Activated CD4-positive, alpha-beta T cell treated with anti-CD3 and anti-CD28 coated beads, Interleukin-2, amount 10 ng/mL, durations not matched to agents 24 days and 14 days (primary cell): ENCODE measurements at regions of chr9 and their contacts with region 1.

Region 1: GRCh38 chr9:88303721-88304451 is 84.4 kb upstream of the SPIN1 start:
- DNase-seq: peak; percentile 89
- H3K4me3 Mint-ChIP-seq: peak overlapping the region; percentile 62
- H3K27ac Mint-ChIP-seq: peak overlapping the region; percentile 92
- H3K4me1 Mint-ChIP-seq: peaks cover 53% of the 10 kb centered on the region
- H3K27me3 Mint-ChIP-seq: no peaks in the 10 kb centered on the region

Region 2: DNA sequence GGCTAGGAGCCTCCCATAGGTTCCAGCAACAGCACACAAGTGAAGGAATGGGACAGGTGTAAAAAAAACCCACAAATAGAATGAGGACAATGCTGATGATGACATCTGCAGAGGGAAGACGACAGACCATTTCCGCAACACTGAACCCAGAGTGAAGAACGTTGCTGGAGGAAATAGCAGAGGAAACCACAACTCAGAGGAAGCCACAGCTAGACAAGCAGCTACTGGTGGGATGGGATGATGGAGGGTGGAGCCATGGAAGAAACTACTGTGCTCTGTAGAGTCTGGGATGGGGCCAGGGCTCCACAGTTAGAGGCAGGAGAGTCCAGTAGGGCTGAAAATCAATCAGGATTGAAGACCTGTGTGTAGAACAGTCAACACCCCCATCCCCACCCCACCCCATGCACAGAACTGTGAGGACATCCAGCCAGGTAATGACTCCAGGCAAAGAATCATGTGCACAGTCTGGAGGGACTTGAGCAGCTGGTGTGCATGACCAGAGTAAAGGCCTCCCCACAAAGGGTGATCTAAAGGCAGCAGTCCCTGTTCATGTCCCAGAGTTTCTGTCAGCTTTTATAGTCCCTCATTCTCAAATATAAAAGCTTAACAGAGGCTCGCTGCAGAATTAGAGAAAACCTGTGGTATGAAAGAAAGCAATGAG is 19.1 kb after region 1 on chr9:
- intact Hi-C with region 1: loop called (anchors 1 kb)
- DNase-seq: peak; percentile 91
- H3K4me3 Mint-ChIP-seq: peak overlapping the region; percentile 49
- H3K27ac Mint-ChIP-seq: peak overlapping the region; percentile 87
- H3K4me1 Mint-ChIP-seq: peaks cover 40% of the 10 kb centered on the region
- H3K27me3 Mint-ChIP-seq: no peaks in the 10 kb centered on the region

Region 3: GRCh38 chr9:88433583-88434255 is 129.8 kb after region 1 on chr9:
- intact Hi-C with region 1: loop called (anchors 10 kb)
- DNase-seq: peak; percentile 70
- H3K4me3 Mint-ChIP-seq: peak overlapping the region; percentile 56
- H3K27ac Mint-ChIP-seq: peak overlapping the region; percentile 83
- H3K4me1 Mint-ChIP-seq: peaks cover 40% of the 10 kb centered on the region
- H3K27me3 Mint-ChIP-seq: no peaks in the 10 kb centered on the region